ENCODE measurements at regions of chr17 and their contacts with region 1.

Region 1: GRCh38 chr17:17729620-17730249 is 48.5 kb downstream of the RAI1 start:
- DNase-seq: no peak
- H3K4me3 ChIP-seq: no peak overlapping the region
- H3K27ac ChIP-seq: peak overlapping the region; percentile 48
- H3K4me1 ChIP-seq: peaks cover 64% of the 10 kb centered on the region
- H3K27me3 ChIP-seq: no peaks in the 10 kb centered on the region
- CTCF ChIP-seq: peak; percentile 79 to 89

Region 2: GRCh38 chr17:17663160-17664063 is 66.3 kb before region 1 on chr17:
- CTCF ChIA-PET with region 1: no interaction called
- dilution Hi-C with region 1: loop called (anchors 5 kb)
- in situ Hi-C with region 1: no loop called
- intact Hi-C with region 1: no loop called
- DNase-seq: peak; percentile 92
- H3K4me3 ChIP-seq: no peak overlapping the region
- H3K27ac ChIP-seq: no peak overlapping the region
- H3K4me1 ChIP-seq: peaks cover 36% of the 10 kb centered on the region
- H3K27me3 ChIP-seq: no peaks in the 10 kb centered on the region
- CTCF ChIP-seq: no peak

Region 3: DNA sequence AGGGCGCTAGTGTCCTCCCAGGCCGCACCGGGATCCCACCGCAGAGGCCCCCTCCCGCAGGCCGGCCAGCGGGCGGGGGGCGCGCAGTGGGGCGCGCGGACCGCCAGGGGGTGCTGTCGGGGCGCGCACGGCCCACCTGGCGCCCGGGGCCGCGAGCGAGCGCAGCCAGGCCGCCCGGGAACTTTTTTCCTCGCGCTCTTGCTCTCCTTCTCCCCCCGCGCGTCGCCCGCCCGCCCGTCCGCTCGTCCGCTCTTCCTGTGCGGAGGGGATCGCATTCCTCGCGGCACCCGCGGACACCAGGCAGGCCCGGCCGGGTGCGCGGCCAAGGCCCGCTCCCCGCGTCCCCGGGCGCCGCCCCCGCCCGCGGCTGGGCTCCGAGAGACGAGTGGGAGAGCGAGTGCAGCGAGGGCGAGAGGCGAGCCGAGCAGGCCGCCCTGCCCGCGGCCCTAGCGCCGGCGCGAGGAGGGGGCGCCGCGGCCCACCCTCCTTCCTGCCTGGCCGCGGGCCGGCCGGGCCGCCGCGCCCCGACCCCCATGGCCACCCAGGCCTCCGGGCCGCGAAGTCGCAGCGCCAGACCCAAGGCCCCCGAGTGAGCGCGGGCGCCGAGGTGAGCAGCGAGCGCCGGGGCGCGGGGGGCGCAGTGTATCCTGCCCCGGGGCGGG is 48.4 kb before region 1 on chr17 and contains the start of gene RAI1:
- CTCF ChIA-PET with region 1: no interaction called
- dilution Hi-C with region 1: no loop called
- in situ Hi-C with region 1: no loop called
- intact Hi-C with region 1: no loop called
- DNase-seq: peak; percentile 71
- H3K4me3 ChIP-seq: peak within 1 kb of the TSS; percentile 72 to 84 (median 84)
- H3K27ac ChIP-seq: peak within 1 kb of the TSS; percentile 78
- H3K4me1 ChIP-seq: peaks cover 50% of the 10 kb centered on the region
- H3K27me3 ChIP-seq: no peaks in the 10 kb centered on the region
- CTCF ChIP-seq: peak; percentile 47 to 55
- total RNA-seq, gene RAI1: 23.8 to 41.9 TPM

Region 4: GRCh38 chr17:17694169-17695081 is 35.3 kb before region 1 on chr17:
- CTCF ChIA-PET with region 1: no interaction called
- dilution Hi-C with region 1: no loop called
- in situ Hi-C with region 1: no loop called
- intact Hi-C with region 1: loop called (anchors 2 kb)
- DNase-seq: peak; percentile 71
- H3K4me3 ChIP-seq: peak overlapping the region; percentile 49 to 63 (median 57)
- H3K27ac ChIP-seq: peak overlapping the region; percentile 84
- H3K4me1 ChIP-seq: peaks cover 87% of the 10 kb centered on the region
- H3K27me3 ChIP-seq: no peaks in the 10 kb centered on the region
- CTCF ChIP-seq: no peak

Region 5: GRCh38 chr17:17710728-17711541 is 18.8 kb before region 1 on chr17:
- CTCF ChIA-PET with region 1: no interaction called
- dilution Hi-C with region 1: no loop called
- in situ Hi-C with region 1: no loop called
- intact Hi-C with region 1: loop called (anchors 1 kb)
- DNase-seq: peak; percentile 86
- H3K4me3 ChIP-seq: peak overlapping the region in 1 of 3 experiments; percentile 4
- H3K27ac ChIP-seq: peak overlapping the region; percentile 38
- H3K4me1 ChIP-seq: peaks cover 47% of the 10 kb centered on the region
- H3K27me3 ChIP-seq: no peaks in the 10 kb centered on the region
- CTCF ChIP-seq: no peak

Region 6: DNA sequence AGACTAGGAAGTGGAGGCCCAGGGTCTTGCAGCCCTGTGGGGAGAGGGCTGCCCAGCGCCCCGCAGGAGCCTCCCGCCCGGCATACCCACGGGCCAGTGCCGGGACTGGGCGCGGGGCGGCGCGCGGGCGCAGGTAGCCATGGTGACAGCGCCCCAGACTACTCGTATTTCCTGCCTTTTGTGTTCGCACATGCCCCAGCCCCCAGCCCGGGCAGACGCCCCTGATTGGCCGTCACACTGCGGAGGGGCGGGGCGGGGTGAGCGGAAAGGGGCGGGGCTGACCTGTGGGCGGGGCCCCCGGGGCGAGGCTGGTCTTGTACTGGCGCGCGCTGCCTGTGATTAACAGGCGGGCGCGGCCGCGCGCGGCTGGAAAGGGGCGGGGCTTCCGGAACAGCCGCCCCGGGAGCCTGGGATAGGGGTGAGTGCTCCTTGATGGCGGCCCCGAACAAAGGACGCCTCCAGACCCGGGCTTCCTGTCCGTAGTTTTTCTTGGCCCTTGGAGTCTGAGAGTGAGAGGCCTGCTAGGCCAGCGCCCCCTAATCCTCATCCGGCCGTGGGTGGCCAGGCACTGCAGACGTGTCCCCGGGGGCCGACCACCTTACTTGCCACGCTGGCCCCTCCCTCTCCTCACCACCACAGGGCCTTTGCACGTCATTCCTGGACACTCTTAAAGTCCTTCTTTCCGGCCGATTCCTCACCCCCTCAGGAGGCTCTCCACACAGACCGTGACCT is 22.5 kb after region 1 on chr17:
- CTCF ChIA-PET with region 1: no interaction called
- dilution Hi-C with region 1: no loop called
- in situ Hi-C with region 1: no loop called
- intact Hi-C with region 1: loop called (anchors 1 kb)
- DNase-seq: peak; percentile 93
- H3K4me3 ChIP-seq: peak overlapping the region; percentile 30 to 53 (median 49)
- H3K27ac ChIP-seq: peak overlapping the region; percentile 82
- H3K4me1 ChIP-seq: peaks cover 58% of the 10 kb centered on the region
- H3K27me3 ChIP-seq: no peaks in the 10 kb centered on the region
- CTCF ChIP-seq: peak; percentile 16 to 32

Region 7: DNA sequence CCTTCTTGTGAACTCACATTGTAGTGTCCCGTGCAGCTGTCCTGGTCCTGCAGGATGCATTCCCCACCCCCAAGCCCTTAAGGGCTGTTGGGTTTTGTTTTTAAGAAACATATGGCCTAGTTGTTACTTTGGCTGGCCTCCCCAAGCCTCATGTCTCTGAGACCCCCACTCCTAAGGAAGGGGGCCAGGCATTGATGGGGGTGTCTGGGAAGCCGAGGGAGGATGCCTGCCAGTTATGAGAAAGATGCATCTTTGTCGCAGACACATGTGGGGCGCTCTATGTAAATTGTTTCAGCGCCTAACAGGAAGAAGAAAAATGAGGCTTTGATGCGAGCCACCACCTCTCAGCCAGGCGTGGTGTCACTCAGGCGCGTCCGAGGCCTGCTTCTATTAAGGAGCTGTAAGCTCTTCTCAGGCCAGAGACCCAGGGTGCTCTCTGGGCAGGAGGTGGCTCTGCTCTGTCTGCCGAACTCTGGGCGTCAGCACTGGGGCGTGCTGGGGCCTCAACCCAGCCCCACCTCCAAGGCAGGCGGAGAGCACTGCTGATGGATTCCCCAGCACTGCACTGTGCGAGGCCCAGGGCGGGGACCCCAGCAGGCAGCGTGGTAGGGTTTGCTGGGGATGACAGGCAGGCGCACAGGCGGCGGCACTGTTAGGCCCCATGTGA is 36.5 kb after region 1 on chr17:
- CTCF ChIA-PET with region 1: no interaction called
- dilution Hi-C with region 1: loop called (anchors 5 kb)
- in situ Hi-C with region 1: no loop called
- intact Hi-C with region 1: no loop called
- DNase-seq: no peak
- H3K4me3 ChIP-seq: no peak overlapping the region
- H3K27ac ChIP-seq: no peak overlapping the region
- H3K4me1 ChIP-seq: peaks cover 14% of the 10 kb centered on the region
- H3K27me3 ChIP-seq: no peaks in the 10 kb centered on the region
- CTCF ChIP-seq: no peak

Region 8: DNA sequence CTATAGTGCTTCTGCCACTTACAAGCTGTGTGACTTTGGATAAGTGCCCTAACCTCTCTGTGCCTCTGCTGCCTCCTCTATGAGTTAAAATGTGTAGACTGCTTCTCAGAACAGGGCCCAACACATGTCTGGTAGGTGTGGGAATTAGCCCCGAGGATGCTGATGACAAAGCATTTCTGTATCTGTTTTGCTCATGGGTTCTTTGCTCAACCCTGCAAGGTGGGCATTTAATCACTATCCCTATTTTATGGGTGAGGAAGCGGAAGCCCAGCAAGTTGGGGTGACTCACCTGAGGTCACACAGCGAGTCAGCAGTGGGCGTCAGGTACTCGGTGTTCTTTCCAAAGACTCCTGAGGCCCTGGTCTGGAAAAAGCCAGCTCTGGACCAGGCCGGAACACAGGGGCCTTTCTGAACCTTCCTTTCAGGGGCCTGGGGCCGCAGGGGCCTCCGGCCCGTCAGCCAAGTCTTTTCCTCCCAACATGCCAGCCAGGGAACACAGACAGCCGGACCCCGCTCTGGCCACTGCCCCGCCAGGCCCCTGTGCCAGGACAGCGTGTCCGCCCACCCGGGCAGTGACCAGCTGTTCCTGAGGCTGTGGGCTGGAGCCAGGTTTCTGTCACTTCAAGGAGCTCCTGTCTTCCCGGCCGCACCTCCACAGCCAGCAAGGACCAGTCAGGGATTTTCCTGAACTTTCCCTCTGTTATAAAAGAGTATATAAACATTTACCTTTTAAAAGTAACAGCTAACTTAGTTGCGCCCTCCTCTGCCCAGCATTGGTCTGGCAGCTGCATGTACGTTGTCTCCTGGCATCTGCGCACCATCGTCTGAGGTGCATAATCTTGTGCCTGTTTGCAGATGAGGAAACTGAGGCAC is 44.5 kb after region 1 on chr17:
- CTCF ChIA-PET with region 1: no interaction called
- dilution Hi-C with region 1: loop called (anchors 5 kb)
- in situ Hi-C with region 1: no loop called
- intact Hi-C with region 1: loop called (anchors 1 kb)
- DNase-seq: peak; percentile 97
- H3K4me3 ChIP-seq: peak overlapping the region in 1 of 3 experiments; percentile 19
- H3K27ac ChIP-seq: peak overlapping the region; percentile 98
- H3K4me1 ChIP-seq: peaks cover 23% of the 10 kb centered on the region
- H3K27me3 ChIP-seq: no peaks in the 10 kb centered on the region
- CTCF ChIP-seq: peak; percentile 67 to 77

Measured in mammary epithelial cell (primary cell).